Activated T-helper 2 cell treated with anti-CD3 and anti-CD28 coated beads, Interferon-gamma antibody, Interleukin-2, Interleukin-4, amounts not matched to agents 10 μg/mL and 5 μg/mL and 100 μg/mL, durations not matched to agents 14 hours and 24 hours and 36 hours (primary cell): ENCODE measurements at regions of chr7 and their contacts with region 1.

Region 1: GRCh38 chr7:113118074-113118959 is at the start of gene SMIM30:
- DNase-seq: peak; percentile 82
- H3K4me3 Mint-ChIP-seq: peak within 1 kb of the TSS; percentile 94
- H3K27ac Mint-ChIP-seq: peak within 1 kb of the TSS; percentile 94
- H3K4me1 Mint-ChIP-seq: peaks cover 42% of the 10 kb centered on the region
- H3K27me3 Mint-ChIP-seq: no peaks in the 10 kb centered on the region
- total RNA-seq, gene SMIM30: 43.5 and 45.6 TPM in 2 replicates

Region 2: GRCh38 chr7:112449902-112450806 is 668.2 kb before region 1 on chr7 and contains the start of gene IFRD1:
- intact Hi-C with region 1: loop called (anchors 5 kb)
- DNase-seq: peak; percentile 96
- H3K4me3 Mint-ChIP-seq: peak within 1 kb of the TSS; percentile 97
- H3K27ac Mint-ChIP-seq: peak within 1 kb of the TSS; percentile 98
- H3K4me1 Mint-ChIP-seq: peaks cover 50% of the 10 kb centered on the region
- H3K27me3 Mint-ChIP-seq: no peaks in the 10 kb centered on the region
- total RNA-seq, gene IFRD1: 49.5 and 51.7 TPM in 2 replicates

Region 3: GRCh38 chr7:112789817-112790585 is 328.3 kb before region 1 on chr7 and contains the start of gene TMEM168:
- intact Hi-C with region 1: loop called (anchors 10 kb)
- DNase-seq: peak; percentile 79
- H3K4me3 Mint-ChIP-seq: peak within 1 kb of the TSS; percentile 93
- H3K27ac Mint-ChIP-seq: peak within 1 kb of the TSS; percentile 86
- H3K4me1 Mint-ChIP-seq: peaks cover 31% of the 10 kb centered on the region
- H3K27me3 Mint-ChIP-seq: no peaks in the 10 kb centered on the region
- total RNA-seq, gene TMEM168: 16.3 and 17.7 TPM in 2 replicates

Region 4: DNA sequence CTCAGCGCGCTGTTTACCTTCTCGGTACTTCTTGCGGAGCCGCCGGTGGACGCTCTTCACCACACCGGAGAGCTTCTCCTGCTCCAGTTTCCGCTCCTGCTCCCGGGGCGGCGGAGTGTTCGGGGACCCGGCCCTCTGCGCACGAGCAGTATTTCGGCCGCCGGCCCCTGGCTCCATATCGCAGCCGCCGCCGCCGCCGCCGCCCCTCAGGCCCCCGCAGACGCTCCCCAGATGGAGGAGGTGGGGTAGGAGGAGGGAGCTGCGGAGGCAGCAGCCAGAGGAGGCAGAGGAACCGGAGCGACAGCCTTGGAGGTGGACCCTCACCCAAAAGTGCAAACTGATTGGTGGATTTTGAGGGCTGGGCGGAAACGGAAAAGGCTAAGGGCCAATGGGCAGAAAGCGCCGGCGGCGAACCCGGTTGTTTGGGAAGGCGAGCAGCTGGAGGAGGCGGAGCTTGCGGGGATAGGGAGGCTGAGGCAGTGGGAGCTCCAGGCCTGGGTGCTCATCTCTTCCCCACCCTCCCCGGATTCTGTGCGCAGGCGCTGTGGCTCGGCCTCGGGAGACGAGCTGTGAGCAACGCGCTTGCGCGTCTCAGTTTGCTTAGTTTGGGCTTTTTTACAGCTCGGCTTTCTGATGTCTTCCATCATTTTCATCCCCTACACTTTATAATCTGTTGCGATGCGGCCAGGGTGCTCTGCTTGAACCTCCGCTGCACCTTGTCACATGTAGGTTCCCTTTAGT is 178.6 kb before region 1 on chr7:
- intact Hi-C with region 1: loop called (anchors 1 kb)
- DNase-seq: peak; percentile 99
- H3K4me3 Mint-ChIP-seq: peak overlapping the region; percentile 91
- H3K27ac Mint-ChIP-seq: peak overlapping the region; percentile 94
- H3K4me1 Mint-ChIP-seq: peaks cover 27% of the 10 kb centered on the region
- H3K27me3 Mint-ChIP-seq: peaks cover 4% of the 10 kb centered on the region

Region 5: GRCh38 chr7:113086431-113086888 is 31.9 kb before region 1 on chr7 and contains the start of gene GPR85:
- intact Hi-C with region 1: loop called (anchors 2 kb)
- DNase-seq: peak; percentile 17
- H3K4me3 Mint-ChIP-seq: peak within 1 kb of the TSS; percentile 52
- H3K27ac Mint-ChIP-seq: no peak within 1 kb of the TSS
- H3K4me1 Mint-ChIP-seq: peaks cover 10% of the 10 kb centered on the region
- H3K27me3 Mint-ChIP-seq: peaks cover 52% of the 10 kb centered on the region
- total RNA-seq, gene GPR85: not detected in 2 replicates

Region 6: GRCh38 chr7:113283861-113284260 is 165.5 kb after region 1 on chr7:
- intact Hi-C with region 1: loop called (anchors 2 kb)
- DNase-seq: no peak
- H3K4me3 Mint-ChIP-seq: no peak overlapping the region
- H3K27ac Mint-ChIP-seq: no peak overlapping the region
- H3K4me1 Mint-ChIP-seq: peaks cover 5% of the 10 kb centered on the region
- H3K27me3 Mint-ChIP-seq: peaks cover 3% of the 10 kb centered on the region